ENCODE measurements at regions of chr7 and their contacts with region 1.

Region 1: GRCh38 chr7:64902806-64903721 is at the start of gene ZNF273:
- DNase-seq: peak; percentile 91
- ATAC-seq: peak; percentile 99
- H3K4me3 ChIP-seq: peak within 1 kb of the TSS; percentile 93 to 97 (median 95)
- H3K27ac ChIP-seq: peak within 1 kb of the TSS; percentile 65
- H3K4me1 ChIP-seq: peaks cover 51% of the 10 kb centered on the region
- H3K27me3 ChIP-seq: no peaks in the 10 kb centered on the region; a peak in 1 of 5 replicates
- CTCF ChIP-seq: no peak
- EP300 ChIP-seq: no peak
- POLR2A ChIP-seq: peak; percentile 76 to 79
- RAD21 ChIP-seq: no peak
- total RNA-seq, gene ZNF273: 5.8 and 6.8 TPM in 2 replicates

Region 2: DNA sequence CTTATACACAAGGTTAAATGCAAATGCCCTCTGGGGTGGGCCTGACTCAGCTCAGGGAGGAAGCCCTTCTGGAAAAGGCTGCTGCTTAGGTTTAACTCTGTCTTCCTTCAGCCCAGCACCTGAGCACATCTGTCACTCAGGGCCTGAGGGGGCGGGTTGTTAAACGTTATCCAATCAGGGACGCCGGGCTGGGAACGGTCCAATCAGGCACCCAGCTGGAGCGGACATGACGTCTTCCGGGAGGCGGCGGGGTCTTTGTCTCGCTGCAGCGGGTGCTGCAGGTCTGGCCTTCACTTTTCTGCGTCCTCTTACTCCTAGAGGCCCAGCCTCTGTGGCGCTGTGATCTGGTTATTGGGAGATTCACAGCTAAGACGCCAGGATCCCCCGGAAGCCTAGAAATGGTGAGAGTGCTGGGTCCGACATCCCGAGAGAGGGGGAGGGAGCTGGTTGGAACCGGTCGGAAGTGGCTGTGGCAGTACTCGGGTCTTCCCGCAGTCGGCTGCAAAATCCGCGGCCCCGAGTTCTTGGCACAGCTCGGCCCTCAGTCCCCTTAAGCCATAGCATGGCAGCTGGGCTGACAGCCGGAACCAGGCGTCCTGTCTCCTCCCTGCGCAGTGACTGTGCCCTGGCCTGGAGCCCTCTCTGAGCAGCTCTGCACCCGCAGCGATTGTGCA is 108.8 kb before region 1 on chr7 and contains the start of gene ZNF138:
- CTCF ChIA-PET with region 1: no interaction called
- POLR2A ChIA-PET with region 1: no interaction called
- in situ Hi-C with region 1: no loop called
- intact Hi-C with region 1: loop called (anchors 5 kb)
- DNase-seq: peak; percentile 93
- ATAC-seq: peak; percentile 100
- H3K4me3 ChIP-seq: peak within 1 kb of the TSS; percentile 91 to 99 (median 97)
- H3K27ac ChIP-seq: peak within 1 kb of the TSS; percentile 69
- H3K4me1 ChIP-seq: peaks cover 18% of the 10 kb centered on the region
- H3K27me3 ChIP-seq: no peaks in the 10 kb centered on the region; a peak in 1 of 5 replicates
- CTCF ChIP-seq: no peak
- EP300 ChIP-seq: no peak
- POLR2A ChIP-seq: peak; percentile 70 to 79
- RAD21 ChIP-seq: no peak
- total RNA-seq, gene ZNF138: 5.8 and 7.6 TPM in 2 replicates